Colonic mucosa (tissue), 4 donors: ENCODE measurements at regions of chr14 and their contacts with region 1.

Region 1: DNA sequence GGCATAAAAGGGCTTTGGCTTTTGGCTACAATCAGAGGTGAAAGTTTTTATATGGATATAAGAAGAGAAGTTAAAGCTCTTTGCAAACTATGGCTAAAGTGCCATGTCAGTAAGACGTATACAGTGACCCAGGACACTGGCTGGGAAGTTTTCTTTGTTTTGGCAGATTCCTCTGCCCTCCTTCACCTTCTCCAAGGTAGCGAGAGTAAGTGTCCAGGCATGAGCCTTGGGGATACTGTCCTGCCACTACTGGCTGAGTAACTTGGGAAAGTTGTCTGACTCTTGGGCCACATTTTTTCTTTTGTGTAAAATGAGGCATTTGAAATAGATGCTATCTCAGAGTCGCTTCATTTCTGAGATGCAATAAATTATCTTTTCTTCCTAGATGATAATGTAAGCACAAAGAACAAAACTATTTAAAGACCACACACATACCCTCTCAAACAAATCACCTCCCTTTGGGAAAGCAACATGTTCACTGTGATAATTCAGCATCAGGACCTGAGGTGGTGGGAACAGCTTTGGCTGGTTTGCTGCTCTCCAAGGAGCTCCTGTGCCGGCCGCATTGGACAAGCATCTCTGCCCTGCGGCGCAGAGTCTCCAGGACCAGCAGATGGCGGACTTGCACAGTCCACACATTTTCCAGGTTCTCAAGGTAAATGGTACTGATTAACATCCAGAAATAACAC is 106.3 kb downstream of the PTCSC3 start:
- DNase-seq: peak; percentile 48
- H3K4me3 ChIP-seq: no peak overlapping the region
- H3K27ac ChIP-seq: no peak overlapping the region
- H3K4me1 ChIP-seq: no peaks in the 10 kb centered on the region
- H3K27me3 ChIP-seq: no peaks in the 10 kb centered on the region
- CTCF ChIP-seq: peak; percentile 48

Region 2: GRCh38 chr14:35687335-35687939 is 382.7 kb before region 1 on chr14:
- intact Hi-C with region 1: no loop called
- DNase-seq: peak; percentile 25
- H3K4me3 ChIP-seq: no peak overlapping the region
- H3K27ac ChIP-seq: no peak overlapping the region
- H3K4me1 ChIP-seq: no peaks in the 10 kb centered on the region
- H3K27me3 ChIP-seq: no peaks in the 10 kb centered on the region
- CTCF ChIP-seq: peak; percentile 75

Region 3: DNA sequence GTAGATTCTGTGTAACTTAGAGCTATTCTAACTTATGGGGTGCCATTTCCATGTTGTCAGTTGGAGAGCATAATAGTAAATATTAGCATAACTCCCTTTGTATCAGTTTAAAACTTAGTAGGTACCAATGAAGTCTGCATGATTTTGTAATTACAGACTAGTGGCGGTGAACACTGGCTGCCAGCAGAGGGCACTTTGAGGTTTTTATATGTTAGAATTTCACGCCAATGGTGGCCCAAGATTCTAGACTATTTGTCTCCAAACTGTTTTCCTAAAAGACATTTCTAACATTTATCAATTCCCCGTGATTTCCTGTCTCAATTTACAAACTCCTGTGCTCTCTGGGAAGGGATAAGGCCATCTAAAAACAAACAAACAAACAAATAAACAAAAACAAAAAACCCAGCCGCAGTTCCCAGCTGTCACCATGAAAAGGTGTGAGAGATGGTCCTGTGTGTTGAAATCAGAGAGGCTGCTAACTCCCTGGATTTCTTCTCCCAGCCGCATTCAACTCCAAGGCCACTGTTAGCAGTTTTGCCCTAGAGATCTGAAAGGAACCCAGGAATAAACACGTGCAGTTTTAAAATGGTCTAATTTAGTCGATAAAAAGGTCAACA is 186.4 kb before region 1 on chr14:
- intact Hi-C with region 1: loop called (anchors 5 kb)
- DNase-seq: no peak
- H3K4me3 ChIP-seq: no peak overlapping the region
- H3K27ac ChIP-seq: no peak overlapping the region
- H3K4me1 ChIP-seq: no peaks in the 10 kb centered on the region
- H3K27me3 ChIP-seq: no peaks in the 10 kb centered on the region
- CTCF ChIP-seq: peak; percentile 40

Region 4: DNA sequence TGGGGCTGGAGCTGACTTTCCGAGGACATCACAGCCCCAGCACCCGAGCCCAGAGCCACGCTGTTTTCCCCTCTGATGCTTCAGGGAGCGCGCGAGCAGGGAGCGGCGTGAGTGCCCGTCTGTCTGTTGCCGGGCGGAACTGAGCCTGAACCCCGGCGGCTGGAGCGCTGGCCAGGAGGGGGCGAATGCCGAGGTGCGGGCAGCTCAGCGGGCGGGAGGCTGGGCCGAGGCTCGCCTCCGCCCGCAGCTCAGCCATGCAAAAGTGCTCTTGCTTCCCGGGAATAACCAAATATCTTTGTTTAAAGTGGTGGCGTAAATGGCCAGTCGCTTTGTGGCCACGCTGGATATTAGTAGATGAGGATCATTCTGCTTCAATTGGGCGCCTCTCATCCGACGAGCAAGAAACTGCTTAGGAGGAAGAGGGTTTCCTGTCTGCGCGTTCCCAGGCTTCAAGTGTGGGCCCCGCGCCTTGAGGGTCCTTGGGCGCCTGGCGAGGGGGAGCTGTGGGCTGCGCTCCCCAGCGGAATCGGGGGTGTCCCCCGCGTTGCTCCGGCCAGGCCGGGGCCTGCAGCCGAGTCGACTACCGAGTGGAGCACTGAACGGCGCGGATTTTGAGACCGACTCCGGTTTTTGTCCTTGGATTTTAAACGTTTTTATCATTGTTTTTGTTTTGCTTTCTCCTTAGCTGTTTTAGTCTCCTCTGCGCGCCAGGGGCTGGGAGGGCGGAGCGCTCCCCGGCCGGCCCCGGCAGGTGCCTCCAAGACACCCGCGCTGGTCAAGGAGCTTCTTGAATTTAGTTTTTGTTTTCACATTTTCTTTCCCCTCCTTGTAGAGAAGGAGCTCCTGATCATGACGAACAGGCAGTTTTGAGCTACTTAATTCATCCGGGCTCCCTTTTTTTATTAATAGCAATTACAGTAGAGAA is 450.7 kb after region 1 on chr14:
- intact Hi-C with region 1: no loop called
- DNase-seq: peak; percentile 46
- H3K4me3 ChIP-seq: no peak overlapping the region
- H3K27ac ChIP-seq: no peak overlapping the region
- H3K4me1 ChIP-seq: peaks cover 12% of the 10 kb centered on the region
- H3K27me3 ChIP-seq: peaks cover 100% of the 10 kb centered on the region
- CTCF ChIP-seq: no peak